Caco-2 (cell line): ENCODE measurements at regions of chr13 and their contacts with region 1.

Region 1: DNA sequence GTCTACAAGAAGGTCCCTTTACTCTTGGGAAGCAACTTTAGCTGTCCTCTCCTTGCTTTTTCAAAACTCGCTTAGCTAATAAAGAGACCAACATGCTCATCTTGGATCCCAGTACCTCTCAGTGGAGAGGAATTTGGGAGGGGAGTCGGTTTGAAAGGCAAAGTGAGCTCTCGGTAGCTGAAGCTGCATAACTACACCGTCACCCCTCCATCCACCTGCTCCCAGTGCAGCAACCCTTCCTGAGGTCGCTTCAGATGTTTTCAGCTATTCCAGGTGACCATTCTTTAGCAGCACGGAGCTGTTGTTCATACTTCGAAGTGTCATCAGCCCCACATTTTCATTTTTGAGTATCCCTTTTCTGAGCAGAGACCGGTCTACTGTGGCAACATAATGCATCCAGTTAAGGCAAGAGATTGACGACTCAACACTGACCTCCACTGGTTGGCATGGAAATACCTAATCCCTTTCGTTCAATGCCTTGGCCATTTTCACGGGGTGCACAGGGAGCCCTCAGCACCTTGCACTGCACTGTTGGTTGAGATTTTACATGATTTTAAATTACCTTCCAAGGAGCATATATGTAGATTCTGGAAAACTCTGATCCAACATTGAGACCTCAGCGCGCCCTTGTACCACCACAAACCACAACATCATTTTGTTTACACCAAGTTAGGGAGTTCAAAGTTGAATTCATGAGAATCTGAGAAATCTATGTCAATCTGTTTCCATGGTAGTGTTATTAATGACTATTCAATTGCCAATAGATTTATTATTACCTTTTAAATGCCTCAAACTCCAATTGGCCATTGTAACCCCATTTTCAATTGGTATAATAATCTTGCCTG is 42.2 kb downstream of the DLEU7 start:
- DNase-seq: peak; percentile 55 to 76
- H3K4me3 ChIP-seq: no peak overlapping the region
- H3K4me3 Mint-ChIP-seq: no peak overlapping the region
- H3K27ac Mint-ChIP-seq: no peak overlapping the region
- H3K4me1 ChIP-seq: no peaks in the 10 kb centered on the region
- H3K4me1 Mint-ChIP-seq: no peaks in the 10 kb centered on the region
- H3K27me3 ChIP-seq: no peaks in the 10 kb centered on the region
- H3K27me3 Mint-ChIP-seq: no peaks in the 10 kb centered on the region
- CTCF ChIP-seq: peak; percentile 74 to 82

Region 2: DNA sequence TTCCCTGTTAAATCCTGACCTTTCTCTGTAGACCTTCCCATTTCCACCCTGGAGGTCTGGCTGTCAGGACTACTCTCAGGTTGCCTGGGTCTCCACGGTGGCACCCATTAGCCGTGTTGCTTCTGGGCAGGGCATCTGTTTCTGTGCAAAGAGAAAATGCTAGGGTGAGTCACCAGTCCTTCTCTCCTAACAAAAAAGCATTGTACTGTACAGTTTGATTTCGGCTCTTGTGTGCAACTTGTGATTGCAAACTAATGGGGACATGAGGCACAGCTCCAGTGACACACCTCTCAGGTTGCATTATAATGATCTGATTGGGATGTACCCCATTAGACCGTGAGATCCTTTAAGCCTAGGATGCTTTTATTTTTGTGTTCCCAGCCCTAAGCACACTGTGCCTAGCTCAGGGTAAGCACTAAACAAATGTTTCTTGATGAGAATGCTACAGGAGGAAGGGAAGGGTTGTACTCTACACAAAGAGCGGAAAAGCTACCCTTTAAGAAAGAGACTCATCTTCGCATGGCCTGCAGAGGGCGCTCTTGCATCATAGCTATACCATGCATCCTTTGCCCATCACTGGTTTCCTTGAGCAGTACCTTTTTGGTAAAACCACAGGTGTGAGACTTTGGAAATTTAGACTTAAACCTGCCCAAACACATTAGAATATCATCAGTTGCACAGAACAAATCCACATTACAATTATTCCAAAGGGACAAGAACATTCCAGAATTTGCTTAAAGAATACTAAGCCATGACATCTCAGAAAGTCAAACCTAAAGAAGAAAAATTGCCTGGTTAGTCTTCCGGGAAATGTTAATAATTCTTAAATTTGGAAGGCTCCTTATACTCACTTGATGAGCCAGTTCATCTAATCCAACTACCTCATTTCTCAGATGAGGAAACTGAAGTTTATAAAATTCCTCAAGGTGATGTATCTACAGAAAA is 824.7 kb before region 1 on chr13:
- CTCF ChIA-PET with region 1: interaction called, 5 read pairs
- POLR2A ChIA-PET with region 1: no interaction called
- intact Hi-C with region 1: loop called (anchors 2 kb)
- DNase-seq: peak; percentile 56 to 71
- H3K4me3 ChIP-seq: no peak overlapping the region
- H3K4me3 Mint-ChIP-seq: no peak overlapping the region
- H3K27ac Mint-ChIP-seq: no peak overlapping the region
- H3K4me1 ChIP-seq: peaks cover 10% of the 10 kb centered on the region; the same call in 1 of the 2 replicates
- H3K4me1 Mint-ChIP-seq: peaks cover 18% of the 10 kb centered on the region
- H3K27me3 ChIP-seq: no peaks in the 10 kb centered on the region
- H3K27me3 Mint-ChIP-seq: no peaks in the 10 kb centered on the region
- CTCF ChIP-seq: peak; percentile 93 to 94

Region 3: DNA sequence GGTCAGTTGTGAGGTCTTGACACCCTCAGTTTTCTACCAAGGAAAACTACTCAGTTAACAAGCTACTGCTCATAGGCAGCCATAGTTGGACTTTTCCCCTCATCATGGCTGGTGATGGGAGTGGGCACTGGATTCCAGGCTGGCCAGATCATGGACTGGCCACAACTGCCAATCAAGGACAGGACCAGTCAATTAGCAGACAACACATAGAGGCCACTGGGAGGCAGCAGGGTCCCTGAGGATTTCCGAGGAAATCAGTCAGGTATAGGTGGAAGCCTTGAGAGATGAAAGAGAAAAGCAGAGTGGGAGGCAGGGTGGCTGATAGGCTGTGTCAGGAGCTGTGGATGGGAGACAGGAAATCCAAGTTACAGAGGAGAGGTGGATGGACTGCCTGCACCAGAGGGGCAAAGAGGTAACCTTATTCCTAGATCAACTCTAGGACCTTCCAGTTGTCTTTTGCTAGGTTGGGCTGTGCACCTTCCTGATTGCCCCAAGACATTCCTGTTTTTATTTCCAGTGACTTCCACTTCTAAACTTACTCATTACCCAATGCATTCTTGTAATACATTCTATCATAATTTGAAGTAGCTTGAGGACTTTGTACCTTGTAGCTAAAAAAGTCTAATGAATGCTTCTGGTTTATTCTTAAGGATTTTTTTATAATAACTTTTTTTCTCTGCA is 424.3 kb before region 1 on chr13:
- CTCF ChIA-PET with region 1: no interaction called
- POLR2A ChIA-PET with region 1: no interaction called
- intact Hi-C with region 1: loop called (anchors 5 kb)
- DNase-seq: peak; percentile 39 to 44
- H3K4me3 ChIP-seq: no peak overlapping the region
- H3K4me3 Mint-ChIP-seq: no peak overlapping the region
- H3K27ac Mint-ChIP-seq: no peak overlapping the region
- H3K4me1 ChIP-seq: peaks cover 12% of the 10 kb centered on the region; the same call in 1 of the 2 replicates
- H3K4me1 Mint-ChIP-seq: peaks cover 13% of the 10 kb centered on the region
- H3K27me3 ChIP-seq: no peaks in the 10 kb centered on the region
- H3K27me3 Mint-ChIP-seq: no peaks in the 10 kb centered on the region
- CTCF ChIP-seq: peak in 1 of 2 experiments; percentile 20

Region 4: GRCh38 chr13:50594276-50595051 is 206.8 kb before region 1 on chr13:
- CTCF ChIA-PET with region 1: no interaction called
- POLR2A ChIA-PET with region 1: no interaction called
- intact Hi-C with region 1: loop called (anchors 1 kb)
- DNase-seq: peak; percentile 56 to 57
- H3K4me3 ChIP-seq: no peak overlapping the region
- H3K4me3 Mint-ChIP-seq: no peak overlapping the region
- H3K27ac Mint-ChIP-seq: no peak overlapping the region
- H3K4me1 ChIP-seq: 0 out of 2 replicates have a peak, but pooled peaks cover 4% of the 10 kb centered on the region
- H3K4me1 Mint-ChIP-seq: peaks cover 6% of the 10 kb centered on the region
- H3K27me3 ChIP-seq: no peaks in the 10 kb centered on the region
- H3K27me3 Mint-ChIP-seq: no peaks in the 10 kb centered on the region
- CTCF ChIP-seq: peak; percentile 13 to 33

Region 5: DNA sequence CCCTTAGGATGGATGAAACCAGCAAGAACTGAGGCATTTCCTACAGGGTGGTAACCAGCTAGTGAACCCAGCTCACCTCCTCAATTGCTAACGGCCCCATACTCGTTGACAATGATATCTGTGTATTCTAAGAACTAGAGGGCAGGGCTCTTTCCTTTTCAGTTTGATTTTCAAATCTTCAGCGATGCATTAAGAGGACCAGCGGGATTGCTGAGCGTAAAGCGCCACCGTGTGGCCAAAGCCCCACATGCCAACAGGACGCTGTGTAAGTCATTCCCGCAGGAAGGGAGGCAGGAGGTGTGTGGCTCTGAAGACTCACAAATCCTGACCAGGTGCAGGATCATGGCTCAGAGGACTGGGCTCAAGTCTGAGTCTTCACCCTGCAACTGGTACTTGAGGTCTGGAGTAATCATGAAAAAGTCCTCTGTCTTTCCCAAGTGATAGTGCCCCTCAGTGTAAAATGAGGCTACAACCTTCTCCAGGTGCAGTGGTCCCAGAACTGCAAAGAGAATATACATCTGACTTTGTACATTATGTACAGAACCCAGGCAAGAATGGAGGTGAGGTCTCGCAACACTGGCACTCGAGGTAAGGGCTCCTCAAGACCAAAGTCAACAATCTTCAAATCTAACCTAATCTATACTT is 268.8 kb after region 1 on chr13:
- CTCF ChIA-PET with region 1: no interaction called
- POLR2A ChIA-PET with region 1: no interaction called
- intact Hi-C with region 1: loop called (anchors 5 kb)
- DNase-seq: peak; percentile 78 to 86
- H3K4me3 ChIP-seq: no peak overlapping the region
- H3K4me3 Mint-ChIP-seq: no peak overlapping the region
- H3K27ac Mint-ChIP-seq: no peak overlapping the region
- H3K4me1 ChIP-seq: no peaks in the 10 kb centered on the region
- H3K4me1 Mint-ChIP-seq: no peaks in the 10 kb centered on the region
- H3K27me3 ChIP-seq: no peaks in the 10 kb centered on the region
- H3K27me3 Mint-ChIP-seq: no peaks in the 10 kb centered on the region
- CTCF ChIP-seq: peak; percentile 93 to 95